A549 (cell line): ENCODE measurements at regions of chr2 and their contacts with region 1.

Region 1: DNA sequence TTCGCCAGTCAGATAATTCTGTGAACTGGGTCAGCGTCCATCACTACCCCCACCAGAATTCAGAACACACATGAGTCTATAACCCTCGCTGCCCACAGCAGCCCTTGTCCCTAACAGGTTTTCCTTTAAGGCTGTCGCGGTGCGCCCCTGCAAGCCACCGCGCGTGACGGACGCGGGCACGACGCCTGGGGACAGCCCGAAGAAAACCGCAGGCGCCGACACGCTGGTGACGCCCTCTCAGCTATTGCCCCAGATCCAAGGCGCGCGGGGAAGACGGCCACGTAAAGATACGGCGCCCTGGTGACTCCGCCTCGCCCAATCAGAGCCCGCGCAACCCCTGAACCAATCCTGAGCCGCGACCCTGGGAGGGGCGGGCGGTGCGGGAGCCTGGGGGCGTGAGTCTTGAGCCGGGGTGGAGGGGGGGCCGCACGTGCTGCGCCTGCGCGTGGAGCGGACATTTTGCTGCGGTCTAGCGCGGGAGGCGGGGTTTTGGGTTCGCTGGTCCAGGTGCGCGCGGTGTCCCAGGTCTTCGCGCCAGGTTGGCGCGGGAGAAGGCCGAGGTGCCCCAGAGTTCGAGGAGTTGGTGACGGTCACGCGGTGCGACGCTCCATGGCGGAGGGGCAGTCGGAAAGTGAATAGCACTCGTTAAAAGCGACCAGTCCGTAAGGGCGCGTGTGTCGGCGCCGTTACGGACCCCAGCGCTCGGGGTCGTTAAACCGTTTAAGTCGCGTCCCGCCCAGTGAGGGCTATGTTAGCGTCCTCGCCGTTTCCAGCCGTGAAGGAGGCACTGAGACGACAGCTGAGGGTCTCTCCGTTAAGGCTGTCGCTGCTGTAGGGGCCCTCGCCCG is 15.9 kb downstream of the NMUR1 start:
- DNase-seq: peak; percentile 98
- ATAC-seq: peak; percentile 99 to 100
- H3K4me3 ChIP-seq: peak overlapping the region; percentile 65
- H3K27ac ChIP-seq: peak overlapping the region; percentile 84 to 92
- H3K4me1 ChIP-seq: peaks cover 11% of the 10 kb centered on the region; the same call in 2 of the 3 replicates
- CTCF ChIP-seq: no peak
- EP300 ChIP-seq: no peak
- POLR2A ChIP-seq: peak; percentile 91
- RAD21 ChIP-seq: no peak

Region 2: DNA sequence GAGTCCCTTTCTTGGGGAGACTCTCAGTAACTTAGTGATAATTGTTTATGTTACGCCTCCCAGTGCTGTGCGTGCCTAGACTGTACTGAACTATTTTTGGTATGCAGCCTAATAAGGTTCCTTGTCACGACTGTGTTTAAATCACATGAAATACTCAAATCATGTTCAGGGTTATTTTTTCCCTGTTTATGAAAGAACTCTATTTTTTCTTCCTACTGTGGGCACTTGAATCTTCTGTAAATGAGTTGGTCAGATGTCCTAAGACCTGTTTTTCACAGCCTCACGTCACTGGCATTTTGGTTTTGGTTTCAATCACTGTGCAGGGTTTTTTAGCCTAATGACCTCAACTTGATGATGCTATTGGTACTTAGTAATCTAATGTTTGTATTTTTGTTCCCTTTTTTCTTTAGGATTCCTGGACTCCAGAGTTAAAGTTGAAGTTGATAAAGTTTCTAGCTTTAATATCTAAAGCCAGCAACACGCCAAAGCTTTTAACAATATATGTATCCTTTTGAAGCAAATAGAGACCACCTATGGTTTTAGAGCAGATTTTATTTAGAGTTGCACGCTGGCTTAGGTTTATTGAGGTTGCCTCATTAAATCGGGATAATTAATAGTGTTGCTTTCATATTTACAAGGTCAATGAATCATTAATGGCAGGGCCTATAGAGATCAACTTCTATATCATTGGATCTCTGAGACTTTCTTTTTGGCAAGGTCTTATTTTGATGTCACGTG is 291.8 kb before region 1 on chr2:
- CTCF ChIA-PET with region 1: no interaction called
- POLR2A ChIA-PET with region 1: no interaction called
- DNase-seq: no peak
- ATAC-seq: no peak
- H3K4me3 ChIP-seq: no peak overlapping the region
- H3K27ac ChIP-seq: no peak overlapping the region
- H3K4me1 ChIP-seq: no peaks in the 10 kb centered on the region
- CTCF ChIP-seq: no peak
- EP300 ChIP-seq: no peak
- POLR2A ChIP-seq: no peak
- RAD21 ChIP-seq: no peak

Region 3: DNA sequence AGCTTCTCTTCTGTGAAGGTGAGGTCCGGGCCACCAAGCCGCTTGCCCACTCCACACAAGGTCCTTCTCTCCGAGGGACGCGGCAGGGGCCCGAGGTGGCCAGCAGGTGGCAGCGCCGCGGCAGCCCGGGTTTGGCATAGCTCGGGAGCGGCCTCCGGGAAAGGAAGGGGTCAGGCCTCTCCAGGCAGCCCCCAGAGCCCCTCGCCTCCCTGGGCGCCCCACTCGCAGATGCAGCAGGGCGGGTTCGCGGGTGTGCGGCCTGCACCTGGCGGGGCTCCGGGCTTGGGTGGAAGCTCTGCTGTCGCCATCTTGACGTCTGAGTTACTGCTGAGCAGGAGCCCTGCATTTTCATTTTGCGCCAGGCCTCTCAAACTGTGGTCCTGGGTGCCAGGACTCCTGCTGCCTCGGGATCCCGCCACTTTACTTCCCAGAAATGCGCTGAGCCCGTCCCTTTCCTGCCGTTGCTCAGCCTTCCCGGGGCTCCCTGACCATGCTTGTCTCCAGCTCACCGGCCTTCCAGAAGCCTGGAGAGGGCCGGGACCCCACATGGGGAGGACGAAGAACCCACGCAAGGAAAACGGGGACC is 31.4 kb before region 1 on chr2:
- CTCF ChIA-PET with region 1: interaction called, 12 read pairs
- POLR2A ChIA-PET with region 1: interaction called, 4 read pairs
- DNase-seq: peak; percentile 69 to 87
- ATAC-seq: peak; percentile 98 to 99
- H3K4me3 ChIP-seq: peak overlapping the region; percentile 27
- H3K27ac ChIP-seq: peak overlapping the region; percentile 70 to 96
- H3K4me1 ChIP-seq: peaks cover 4% of the 10 kb centered on the region; the same call in 1 of the 3 replicates
- CTCF ChIP-seq: peak; percentile 86
- EP300 ChIP-seq: no peak
- POLR2A ChIP-seq: no peak
- RAD21 ChIP-seq: peak; percentile 47 to 54

Region 4: DNA sequence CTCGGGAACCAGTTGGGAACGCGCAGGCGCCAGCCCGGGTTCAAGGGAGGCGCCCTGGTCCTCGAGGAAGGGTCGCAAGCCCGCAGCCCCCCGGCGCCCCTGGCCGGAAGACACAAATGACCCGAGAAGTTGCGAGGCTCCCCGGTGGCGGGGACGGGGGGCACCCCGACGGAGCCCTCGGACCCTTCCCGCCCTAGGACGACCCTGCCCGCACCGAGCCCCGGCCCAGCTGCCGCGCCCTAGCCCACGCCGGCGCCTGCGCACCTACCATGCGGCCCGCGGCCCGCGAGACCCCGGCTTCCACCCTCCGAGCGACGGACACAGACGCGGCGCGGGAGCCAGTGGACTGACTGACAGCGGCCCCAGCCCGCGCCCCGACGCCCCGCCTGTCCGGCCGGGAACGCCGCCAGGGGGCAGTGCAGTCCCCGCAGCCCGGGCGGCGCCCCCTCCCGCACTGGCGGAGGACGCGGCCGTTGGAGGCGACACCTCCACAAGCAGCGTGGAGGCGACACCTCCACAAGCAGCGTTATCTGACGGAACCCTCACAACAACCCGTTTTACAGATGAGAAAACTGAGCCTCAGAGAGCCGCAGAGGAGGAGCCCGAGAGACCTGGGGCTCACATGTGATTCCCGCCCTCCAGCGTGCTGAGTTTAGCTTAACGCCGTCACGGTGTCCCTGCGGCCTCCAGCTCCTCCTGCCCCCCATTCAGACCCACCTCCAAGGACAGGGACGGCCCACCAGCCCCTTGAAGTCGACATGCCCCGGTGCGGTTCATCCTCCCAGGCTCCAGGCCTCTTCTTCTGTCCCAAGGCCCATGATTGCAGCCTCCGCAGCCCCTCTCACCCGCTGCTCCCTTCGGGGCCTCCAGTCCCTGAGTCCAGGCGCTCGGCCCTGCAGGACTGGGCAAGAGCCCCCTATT is 16.0 kb after region 1 on chr2 and contains the start of gene NMUR1:
- CTCF ChIA-PET with region 1: interaction called, 18 read pairs
- POLR2A ChIA-PET with region 1: interaction called, 4 read pairs
- DNase-seq: peak; percentile 48 to 52
- ATAC-seq: peak; percentile 62 to 90
- H3K4me3 ChIP-seq: peak within 1 kb of the TSS; percentile 44
- H3K27ac ChIP-seq: peak within 1 kb of the TSS; percentile 30 to 82; a peak in 4 of 6 replicates
- H3K4me1 ChIP-seq: peaks cover 4% of the 10 kb centered on the region; the same call in 1 of the 3 replicates
- CTCF ChIP-seq: peak; percentile 90
- EP300 ChIP-seq: no peak
- POLR2A ChIP-seq: no peak
- RAD21 ChIP-seq: peak; percentile 20 to 57; a peak in 4 of 5 replicates
- polyA plus RNA-seq, gene NMUR1: 0.05 TPM in 1 of 2 replicates, not detected in the other